ENCODE measurements at regions of chr9 and their contacts with region 1.

Region 1: DNA sequence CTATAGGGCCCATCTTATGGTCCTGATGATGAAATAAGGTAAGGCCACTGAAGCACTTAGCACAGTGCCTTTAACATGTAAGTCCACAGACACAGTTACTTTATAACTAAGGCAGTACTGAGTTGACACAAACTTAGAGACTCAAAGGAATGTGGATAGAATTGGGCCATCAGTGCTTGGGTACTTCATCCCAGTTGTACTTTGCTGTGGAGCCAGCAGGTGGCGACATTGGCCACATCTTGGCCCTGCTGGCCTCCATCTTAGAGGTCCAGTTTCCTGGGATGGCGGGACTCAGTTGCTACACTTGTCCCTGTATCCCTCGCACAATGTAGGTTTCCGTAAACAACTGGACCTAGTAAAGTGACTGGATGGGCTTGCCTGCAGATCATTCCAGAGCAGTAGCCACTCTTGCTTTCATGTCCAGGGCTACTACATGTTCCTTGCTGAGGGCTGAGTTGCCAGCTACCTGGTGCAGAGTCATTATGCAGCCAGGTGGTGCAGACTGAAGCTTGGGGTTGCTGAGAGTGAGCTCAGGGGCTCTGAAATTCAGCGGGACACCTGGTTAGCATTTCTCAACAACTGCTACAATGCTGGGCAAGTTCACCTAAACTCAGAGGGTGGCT is 10.6 kb downstream of the MTAP start:
- DNase-seq: peak; percentile 64
- ATAC-seq: peak; percentile 83
- H3K4me3 Mint-ChIP-seq: no peak overlapping the region
- H3K27ac Mint-ChIP-seq: no peak overlapping the region
- H3K4me1 Mint-ChIP-seq: peaks cover 27% of the 10 kb centered on the region
- H3K27me3 Mint-ChIP-seq: no peaks in the 10 kb centered on the region
- CTCF ChIP-seq: peak; percentile 85

Region 2: DNA sequence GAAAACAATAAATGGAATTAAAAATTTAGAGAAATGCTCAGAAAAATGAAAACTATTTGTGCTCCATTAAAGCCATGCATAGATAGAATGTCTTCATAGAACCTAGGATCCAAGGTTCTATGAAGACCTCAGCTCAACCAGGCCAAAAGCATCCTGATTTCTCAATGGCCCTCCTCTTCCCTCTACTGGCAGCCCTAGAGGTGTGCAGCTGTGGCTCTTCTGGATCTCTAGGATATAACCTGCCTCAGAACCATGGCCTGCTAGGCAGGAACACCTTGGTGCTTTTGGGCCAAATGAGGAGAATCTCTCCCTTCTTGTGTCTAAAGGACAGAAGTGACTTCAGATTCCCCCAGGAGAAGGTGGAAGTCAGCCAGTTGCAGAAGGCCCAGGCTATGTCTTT is 357.7 kb before region 1 on chr9:
- CTCF ChIA-PET with region 1: no interaction called
- POLR2A ChIA-PET with region 1: no interaction called
- intact Hi-C with region 1: no loop called
- DNase-seq: no peak
- ATAC-seq: peak; percentile 75
- H3K4me3 Mint-ChIP-seq: no peak overlapping the region
- H3K27ac Mint-ChIP-seq: no peak overlapping the region
- H3K4me1 Mint-ChIP-seq: no peaks in the 10 kb centered on the region
- H3K27me3 Mint-ChIP-seq: peaks cover 33% of the 10 kb centered on the region
- CTCF ChIP-seq: no peak

Region 3: GRCh38 chr9:21709464-21710058 is 103.5 kb before region 1 on chr9:
- CTCF ChIA-PET with region 1: no interaction called
- POLR2A ChIA-PET with region 1: no interaction called
- intact Hi-C with region 1: no loop called
- DNase-seq: no peak
- ATAC-seq: peak; percentile 68
- H3K4me3 Mint-ChIP-seq: no peak overlapping the region
- H3K27ac Mint-ChIP-seq: no peak overlapping the region
- H3K4me1 Mint-ChIP-seq: no peaks in the 10 kb centered on the region
- H3K27me3 Mint-ChIP-seq: peaks cover 16% of the 10 kb centered on the region
- CTCF ChIP-seq: peak; percentile 48

Region 4: GRCh38 chr9:21831961-21832509 is 19.0 kb after region 1 on chr9:
- CTCF ChIA-PET with region 1: interaction called, 5 read pairs
- POLR2A ChIA-PET with region 1: interaction called, 3 read pairs
- intact Hi-C with region 1: loop called (anchors 1 kb)
- DNase-seq: no peak
- ATAC-seq: peak; percentile 54
- H3K4me3 Mint-ChIP-seq: peak overlapping the region; percentile 40
- H3K27ac Mint-ChIP-seq: peak overlapping the region; percentile 86
- H3K4me1 Mint-ChIP-seq: peaks cover 59% of the 10 kb centered on the region
- H3K27me3 Mint-ChIP-seq: no peaks in the 10 kb centered on the region
- CTCF ChIP-seq: no peak

Region 5: GRCh38 chr9:21995177-21996086 is 182.4 kb after region 1 on chr9:
- CTCF ChIA-PET with region 1: interaction called, 10 read pairs
- POLR2A ChIA-PET with region 1: interaction called, 4 read pairs
- intact Hi-C with region 1: no loop called
- DNase-seq: peak; percentile 82
- ATAC-seq: peak; percentile 84
- H3K4me3 Mint-ChIP-seq: peak overlapping the region; percentile 98
- H3K27ac Mint-ChIP-seq: peak overlapping the region; percentile 97
- H3K4me1 Mint-ChIP-seq: peaks cover 24% of the 10 kb centered on the region
- H3K27me3 Mint-ChIP-seq: no peaks in the 10 kb centered on the region
- CTCF ChIP-seq: no peak

Region 6: DNA sequence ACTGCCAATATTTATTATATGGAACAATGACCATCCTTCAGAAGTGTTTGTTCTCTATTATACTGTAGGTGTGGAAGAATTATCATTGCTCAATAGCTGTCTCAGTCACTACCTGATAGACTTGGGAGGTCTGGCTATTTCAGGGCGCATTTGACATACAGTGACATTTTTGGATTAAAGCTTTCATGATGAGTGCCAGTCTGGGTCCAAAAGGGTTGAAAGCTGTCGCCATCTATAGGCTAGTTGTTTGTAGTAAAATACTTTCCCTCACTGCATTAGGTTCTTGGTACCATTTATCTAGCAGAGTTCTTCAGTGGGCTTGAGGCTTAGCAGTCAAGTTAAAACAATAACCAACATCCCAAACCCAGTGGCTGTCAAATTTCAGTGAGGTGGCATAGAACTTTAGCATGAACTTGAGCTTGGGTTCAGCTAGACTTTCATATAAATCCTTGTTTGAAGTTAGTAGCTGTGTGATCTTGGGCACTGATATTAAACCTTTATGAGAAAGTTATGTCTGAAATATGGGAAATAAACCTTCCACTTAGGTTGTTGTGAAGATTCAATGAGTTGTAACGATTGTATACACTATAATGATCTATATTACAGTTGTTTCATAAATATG is 306.6 kb after region 1 on chr9:
- CTCF ChIA-PET with region 1: interaction called, 7 read pairs
- POLR2A ChIA-PET with region 1: no interaction called
- intact Hi-C with region 1: loop called (anchors 1 kb)
- DNase-seq: no peak
- ATAC-seq: no peak
- H3K4me3 Mint-ChIP-seq: no peak overlapping the region
- H3K27ac Mint-ChIP-seq: no peak overlapping the region
- H3K4me1 Mint-ChIP-seq: no peaks in the 10 kb centered on the region
- H3K27me3 Mint-ChIP-seq: peaks cover 4% of the 10 kb centered on the region
- CTCF ChIP-seq: no peak

Region 7: GRCh38 chr9:22307013-22307711 is 494.1 kb after region 1 on chr9:
- CTCF ChIA-PET with region 1: interaction called, 4 read pairs
- POLR2A ChIA-PET with region 1: no interaction called
- intact Hi-C with region 1: loop called (anchors 2 kb)
- DNase-seq: no peak
- ATAC-seq: no peak
- H3K4me3 Mint-ChIP-seq: no peak overlapping the region
- H3K27ac Mint-ChIP-seq: no peak overlapping the region
- H3K4me1 Mint-ChIP-seq: no peaks in the 10 kb centered on the region
- H3K27me3 Mint-ChIP-seq: peaks cover 7% of the 10 kb centered on the region
- CTCF ChIP-seq: no peak

Measured in activated B cell treated with CpG ODN at 0.5 μM for 24 hours (primary cell).